PC-9 (cell line): ENCODE measurements at regions of chr17 and their contacts with region 1.

Region 1: GRCh38 chr17:5272322-5272721 is 9.8 kb upstream of the RABEP1 start:
- DNase-seq: no peak
- H3K4me3 ChIP-seq: no peak overlapping the region
- H3K27ac ChIP-seq: no peak overlapping the region
- H3K4me1 ChIP-seq: no peaks in the 10 kb centered on the region
- H3K27me3 ChIP-seq: no peaks in the 10 kb centered on the region
- CTCF ChIP-seq: no peak

Region 2: GRCh38 chr17:5297245-5297644 is 24.9 kb after region 1 on chr17:
- CTCF ChIA-PET with region 1: no interaction called
- POLR2A ChIA-PET with region 1: no interaction called
- intact Hi-C with region 1: no loop called
- DNase-seq: no peak
- H3K4me3 ChIP-seq: no peak overlapping the region
- H3K27ac ChIP-seq: no peak overlapping the region
- H3K4me1 ChIP-seq: no peaks in the 10 kb centered on the region
- H3K27me3 ChIP-seq: no peaks in the 10 kb centered on the region
- CTCF ChIP-seq: no peak

Region 3: GRCh38 chr17:5329784-5330557 is 57.6 kb after region 1 on chr17:
- CTCF ChIA-PET with region 1: no interaction called
- POLR2A ChIA-PET with region 1: interaction called, 16 read pairs
- intact Hi-C with region 1: no loop called
- DNase-seq: no peak
- H3K4me3 ChIP-seq: no peak overlapping the region
- H3K27ac ChIP-seq: no peak overlapping the region
- H3K4me1 ChIP-seq: no peaks in the 10 kb centered on the region
- H3K27me3 ChIP-seq: no peaks in the 10 kb centered on the region
- CTCF ChIP-seq: no peak